ENCODE measurements at regions of chr2 and their contacts with region 1.

Region 1: GRCh38 chr2:157433394-157433793 is 10.5 kb downstream of the CYTIP start:
- DNase-seq: no peak
- ATAC-seq: peak; percentile 25
- H3K4me3 ChIP-seq: peak overlapping the region; percentile 72
- H3K4me3 Mint-ChIP-seq: peak overlapping the region; percentile 95
- H3K27ac ChIP-seq: peak overlapping the region; percentile 13 to 97
- H3K27ac Mint-ChIP-seq: peak overlapping the region; percentile 97
- H3K4me1 ChIP-seq: peaks cover 33% of the 10 kb centered on the region
- H3K4me1 Mint-ChIP-seq: peaks cover 93% of the 10 kb centered on the region
- H3K27me3 ChIP-seq: no peaks in the 10 kb centered on the region
- H3K27me3 Mint-ChIP-seq: no peaks in the 10 kb centered on the region
- CTCF ChIP-seq: no peak

Region 2: GRCh38 chr2:157420771-157421323 is 12.5 kb before region 1 on chr2:
- CTCF ChIA-PET with region 1: interaction called, 19 read pairs
- POLR2A ChIA-PET with region 1: interaction called, 384 read pairs
- intact Hi-C with region 1: no loop called
- DNase-seq: peak in 3 of 14 experiments; percentile 63 to 73 (median 70)
- ATAC-seq: peak; percentile 8
- H3K4me3 ChIP-seq: no peak overlapping the region
- H3K4me3 Mint-ChIP-seq: peak overlapping the region; percentile 72
- H3K27ac ChIP-seq: peak overlapping the region; percentile 69
- H3K27ac Mint-ChIP-seq: peak overlapping the region; percentile 96
- H3K4me1 ChIP-seq: peaks cover 49% of the 10 kb centered on the region
- H3K4me1 Mint-ChIP-seq: peaks cover 80% of the 10 kb centered on the region
- H3K27me3 ChIP-seq: no peaks in the 10 kb centered on the region
- H3K27me3 Mint-ChIP-seq: no peaks in the 10 kb centered on the region
- CTCF ChIP-seq: no peak

Region 3: GRCh38 chr2:157572725-157573124 is 139.3 kb after region 1 on chr2:
- CTCF ChIA-PET with region 1: no interaction called
- POLR2A ChIA-PET with region 1: no interaction called
- intact Hi-C with region 1: no loop called
- DNase-seq: peak in 3 of 14 experiments; percentile 3 to 38 (median 25)
- ATAC-seq: peak; percentile 58
- H3K4me3 ChIP-seq: no peak overlapping the region
- H3K4me3 Mint-ChIP-seq: no peak overlapping the region
- H3K27ac ChIP-seq: no peak overlapping the region
- H3K27ac Mint-ChIP-seq: no peak overlapping the region
- H3K4me1 ChIP-seq: no peaks in the 10 kb centered on the region
- H3K4me1 Mint-ChIP-seq: no peaks in the 10 kb centered on the region
- H3K27me3 ChIP-seq: no peaks in the 10 kb centered on the region
- H3K27me3 Mint-ChIP-seq: no peaks in the 10 kb centered on the region
- CTCF ChIP-seq: peak; percentile 43